GM12878 (cell line): ENCODE measurements at regions of chr1 and their contacts with region 1.

Region 1: DNA sequence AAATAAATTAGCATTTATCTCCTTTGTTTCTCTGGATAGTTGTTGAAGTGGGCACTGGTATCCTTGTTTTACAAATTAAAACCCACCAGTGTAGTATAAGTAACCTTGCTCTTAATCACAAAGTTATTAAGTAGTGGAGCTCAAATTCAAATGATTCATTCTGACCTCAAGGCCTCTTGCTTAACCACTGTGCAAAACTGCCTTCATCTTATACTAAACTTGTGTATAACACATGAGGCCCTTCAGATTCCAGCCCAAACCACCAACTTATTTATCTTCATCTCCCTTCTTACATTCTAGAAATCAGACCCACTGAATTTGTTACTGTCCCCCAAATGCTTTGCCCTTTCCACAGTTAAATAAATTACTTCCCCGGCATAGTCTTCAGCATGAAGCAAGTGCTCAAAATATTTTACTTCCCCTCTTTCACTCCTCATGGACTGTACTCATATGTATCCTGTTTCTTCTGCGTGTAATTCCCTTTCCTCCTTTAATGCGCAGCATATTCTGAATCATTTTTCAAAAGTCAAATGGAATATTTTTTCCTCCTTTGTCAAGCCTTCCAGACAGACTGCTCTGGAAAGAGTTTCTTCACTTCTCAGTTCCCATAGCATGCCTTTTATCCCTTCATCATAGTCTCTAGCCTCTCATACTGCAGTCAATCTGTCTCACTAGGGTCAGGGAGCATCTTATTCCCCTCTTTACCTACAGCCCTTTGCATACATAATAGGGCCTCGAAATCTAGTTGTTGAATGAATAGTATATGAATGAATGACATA is 19.0 kb upstream of the DNASE2B start:
- DNase-seq: no peak
- ATAC-seq: no peak
- H3K4me3 ChIP-seq: no peak overlapping the region
- H3K27ac ChIP-seq: no peak overlapping the region
- H3K4me1 ChIP-seq: no peaks in the 10 kb centered on the region
- H3K27me3 ChIP-seq: no peaks in the 10 kb centered on the region
- CTCF ChIP-seq: no peak
- EP300 ChIP-seq: no peak
- POLR2A ChIP-seq: no peak
- RAD21 ChIP-seq: no peak

Region 2: DNA sequence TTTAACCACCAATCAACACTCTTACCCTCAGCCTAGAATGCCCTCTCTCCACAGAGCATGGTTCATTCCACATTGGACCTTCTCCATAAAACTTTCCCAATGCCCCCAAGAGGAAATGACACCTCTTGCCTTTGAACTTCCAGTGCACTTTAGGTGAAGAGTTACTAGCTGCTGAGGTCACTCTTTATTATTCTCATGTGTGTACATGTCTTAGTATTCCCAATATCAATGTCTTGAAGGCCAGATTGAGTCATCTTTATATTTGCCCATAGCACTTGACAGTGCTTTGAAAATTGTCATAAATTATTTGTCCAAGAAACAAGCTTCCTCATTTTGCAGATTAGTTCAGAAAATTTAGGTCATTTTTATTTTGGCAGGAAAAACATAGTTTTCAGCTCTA is 10.9 kb after region 1 on chr1:
- CTCF ChIA-PET with region 1: no interaction called
- POLR2A ChIA-PET with region 1: no interaction called
- RAD21 ChIA-PET with region 1: interaction called, 3 read pairs
- SMC1A ChIA-PET with region 1: interaction called, 14 read pairs
- in situ Hi-C with region 1: no loop called
- intact Hi-C with region 1: no loop called
- DNase-seq: no peak
- ATAC-seq: no peak
- H3K4me3 ChIP-seq: no peak overlapping the region
- H3K27ac ChIP-seq: no peak overlapping the region
- H3K4me1 ChIP-seq: peaks cover 10% of the 10 kb centered on the region
- H3K27me3 ChIP-seq: no peaks in the 10 kb centered on the region
- CTCF ChIP-seq: no peak
- EP300 ChIP-seq: no peak
- POLR2A ChIP-seq: no peak
- RAD21 ChIP-seq: no peak